Caco-2 (cell line): ENCODE measurements at regions of chr19 and their contacts with region 1.

Region 1: GRCh38 chr19:16771618-16772017 is 52.0 kb downstream of the NWD1 start:
- DNase-seq: peak; percentile 72 to 78
- H3K4me3 ChIP-seq: no peak overlapping the region
- H3K4me3 Mint-ChIP-seq: no peak overlapping the region
- H3K27ac Mint-ChIP-seq: no peak overlapping the region
- H3K4me1 ChIP-seq: no peaks in the 10 kb centered on the region
- H3K4me1 Mint-ChIP-seq: no peaks in the 10 kb centered on the region
- H3K27me3 ChIP-seq: no peaks in the 10 kb centered on the region
- H3K27me3 Mint-ChIP-seq: peaks cover 6% of the 10 kb centered on the region
- CTCF ChIP-seq: peak; percentile 74 to 81

Region 2: DNA sequence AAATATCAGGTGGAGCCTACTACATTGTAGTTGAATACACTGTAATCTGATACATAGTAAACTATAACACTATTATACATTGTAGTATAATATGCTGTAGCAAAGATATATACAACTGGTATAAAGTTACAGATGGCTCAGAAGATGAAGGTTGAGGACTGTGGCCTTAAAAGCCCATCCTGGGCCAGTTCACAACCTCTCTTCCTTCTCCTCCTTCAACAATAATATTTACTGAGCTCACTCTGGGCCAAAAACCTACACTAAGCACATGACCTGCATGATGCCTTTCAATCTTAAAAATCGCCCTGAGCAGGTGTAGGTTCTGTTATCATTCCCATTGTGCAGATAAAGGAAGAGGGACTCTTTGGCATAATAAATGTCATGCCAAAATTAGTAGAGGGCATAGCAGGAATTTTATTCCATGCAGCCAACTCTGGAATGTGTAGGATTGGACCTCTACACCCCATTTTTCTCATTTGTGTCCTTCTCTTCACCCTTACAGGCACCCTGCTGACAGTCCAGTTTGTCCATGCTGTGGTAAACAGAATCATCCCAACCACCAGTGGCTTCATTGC is 43.0 kb after region 1 on chr19:
- CTCF ChIA-PET with region 1: no interaction called
- POLR2A ChIA-PET with region 1: interaction called, 10 read pairs
- intact Hi-C with region 1: no loop called
- DNase-seq: no peak
- H3K4me3 ChIP-seq: no peak overlapping the region
- H3K4me3 Mint-ChIP-seq: no peak overlapping the region
- H3K27ac Mint-ChIP-seq: no peak overlapping the region
- H3K4me1 ChIP-seq: no peaks in the 10 kb centered on the region
- H3K4me1 Mint-ChIP-seq: no peaks in the 10 kb centered on the region
- H3K27me3 ChIP-seq: no peaks in the 10 kb centered on the region
- H3K27me3 Mint-ChIP-seq: no peaks in the 10 kb centered on the region
- CTCF ChIP-seq: no peak

Region 3: DNA sequence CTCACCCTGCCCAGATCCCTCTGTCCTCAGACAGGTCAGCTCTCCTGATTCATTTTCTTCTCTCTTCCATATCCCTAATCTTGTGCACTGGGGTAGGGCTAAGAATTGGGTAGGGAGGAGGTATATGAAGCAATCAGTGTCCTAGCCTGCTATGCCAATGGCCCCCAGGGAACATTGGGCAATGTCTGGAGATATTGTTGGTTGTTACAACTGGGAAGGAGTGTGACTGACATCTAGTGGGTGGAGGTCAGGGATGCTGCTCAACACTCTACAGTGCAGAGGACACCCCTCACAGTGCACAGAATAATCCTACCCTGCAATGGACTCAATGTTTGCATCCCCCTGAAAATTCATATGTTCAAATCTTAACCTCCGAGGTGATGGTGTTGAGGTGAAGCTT is 197.5 kb after region 1 on chr19:
- CTCF ChIA-PET with region 1: no interaction called
- POLR2A ChIA-PET with region 1: no interaction called
- intact Hi-C with region 1: loop called (anchors 1 kb)
- DNase-seq: peak in 1 of 2 experiments; percentile 41
- H3K4me3 ChIP-seq: no peak overlapping the region
- H3K4me3 Mint-ChIP-seq: no peak overlapping the region
- H3K27ac Mint-ChIP-seq: no peak overlapping the region
- H3K4me1 ChIP-seq: no peaks in the 10 kb centered on the region
- H3K4me1 Mint-ChIP-seq: no peaks in the 10 kb centered on the region
- H3K27me3 ChIP-seq: no peaks in the 10 kb centered on the region
- H3K27me3 Mint-ChIP-seq: peaks cover 3% of the 10 kb centered on the region
- CTCF ChIP-seq: no peak

Region 4: DNA sequence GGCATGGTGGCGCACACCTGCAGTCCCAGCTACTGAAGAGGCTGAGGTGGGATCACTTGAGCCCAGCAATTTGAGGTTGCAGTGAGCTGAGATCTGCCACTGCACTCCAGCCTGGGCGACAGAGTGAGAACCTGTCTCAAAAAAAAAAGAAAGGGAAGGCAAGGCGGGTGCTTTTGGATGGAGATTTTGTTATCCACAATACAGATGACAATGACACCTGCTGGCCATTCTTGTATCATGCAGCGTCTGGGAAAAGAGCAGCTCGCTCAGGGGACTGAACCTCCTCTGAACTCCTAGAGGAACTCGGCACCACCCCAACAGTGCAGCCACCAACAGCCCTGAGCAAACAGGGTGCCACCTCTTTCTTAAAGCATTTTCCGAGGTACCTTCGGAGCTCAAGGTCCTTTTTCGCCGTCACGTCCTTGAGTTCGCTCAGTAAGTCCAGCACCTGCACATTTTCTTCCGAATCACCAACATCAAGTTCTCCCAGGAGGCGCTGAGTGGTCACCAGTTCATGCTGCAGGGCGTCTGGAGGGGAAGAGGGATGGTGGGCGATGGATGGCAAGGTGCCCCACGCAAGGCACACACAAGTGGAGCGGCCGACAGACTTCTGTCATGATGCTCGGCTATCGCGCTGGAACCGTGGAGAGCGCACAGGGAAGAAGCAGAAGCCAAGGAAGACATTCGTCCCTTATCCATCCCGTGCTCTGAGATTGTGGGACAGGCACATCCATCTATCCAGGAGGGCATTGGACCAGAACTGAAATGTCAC is 281.0 kb after region 1 on chr19:
- CTCF ChIA-PET with region 1: interaction called, 5 read pairs
- POLR2A ChIA-PET with region 1: no interaction called
- intact Hi-C with region 1: loop called (anchors 1 kb)
- DNase-seq: peak in 1 of 2 experiments; percentile 55
- H3K4me3 ChIP-seq: no peak overlapping the region
- H3K4me3 Mint-ChIP-seq: no peak overlapping the region
- H3K27ac Mint-ChIP-seq: no peak overlapping the region
- H3K4me1 ChIP-seq: no peaks in the 10 kb centered on the region
- H3K4me1 Mint-ChIP-seq: no peaks in the 10 kb centered on the region
- H3K27me3 ChIP-seq: no peaks in the 10 kb centered on the region
- H3K27me3 Mint-ChIP-seq: no peaks in the 10 kb centered on the region
- CTCF ChIP-seq: peak; percentile 65 to 70